A673 (cell line): ENCODE measurements at regions of chr1 and their contacts with region 1.

Region 1: DNA sequence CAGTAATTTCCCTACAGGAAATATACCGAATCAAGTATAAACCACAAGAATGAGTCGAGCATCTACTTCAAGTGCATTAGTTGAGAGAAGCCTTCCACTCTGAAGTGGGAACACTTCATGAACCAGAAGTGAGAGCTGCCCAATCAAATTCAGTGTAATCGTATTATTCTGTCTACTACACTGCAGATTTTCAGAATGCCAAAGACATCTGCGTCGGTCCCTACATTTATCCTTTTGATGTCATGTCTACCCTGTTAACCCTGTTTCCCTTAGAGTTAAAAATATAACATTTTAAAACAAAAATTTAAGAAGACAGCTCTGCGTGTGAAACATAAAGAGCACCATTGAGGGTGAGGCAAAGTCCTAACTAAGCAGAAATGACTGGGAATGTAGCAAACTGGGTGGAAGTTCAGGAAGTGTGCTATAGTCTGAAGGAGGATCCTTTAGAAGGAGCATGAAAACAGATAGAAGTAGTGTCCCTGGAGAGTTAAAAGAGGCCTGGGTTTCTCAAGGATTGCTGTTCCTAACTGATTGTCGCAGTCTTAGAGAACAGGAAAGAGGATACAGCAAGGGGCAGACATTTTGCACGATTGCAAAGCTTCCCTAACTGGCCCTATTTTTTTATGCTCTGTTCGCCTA is 291.2 kb downstream of the PTPRC start:
- DNase-seq: peak; percentile 92
- H3K4me3 ChIP-seq: peak overlapping the region; percentile 68
- H3K27ac ChIP-seq: peak overlapping the region; percentile 94
- H3K4me1 ChIP-seq: peaks cover 66% of the 10 kb centered on the region
- H3K27me3 ChIP-seq: no peaks in the 10 kb centered on the region
- CTCF ChIP-seq: no peak

Region 2: DNA sequence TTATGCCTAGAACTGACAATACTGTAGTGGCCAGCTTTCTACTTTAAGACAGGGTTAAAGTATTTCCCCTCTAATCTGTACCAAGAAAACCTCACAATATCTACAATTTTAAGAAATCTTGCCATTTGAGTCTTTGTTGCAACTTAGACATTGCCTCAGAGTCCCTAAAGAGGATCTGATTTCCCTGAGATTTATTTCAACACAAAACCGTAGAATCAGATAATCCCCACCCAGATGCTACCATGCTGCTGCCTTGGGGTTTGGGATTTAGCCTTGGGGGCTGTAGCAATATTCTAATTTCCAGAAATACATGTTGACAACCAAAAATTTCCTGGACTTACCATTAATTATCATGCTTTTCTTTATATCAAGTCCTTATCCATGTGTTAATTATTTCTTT is 1104.5 kb before region 1 on chr1:
- CTCF ChIA-PET with region 1: no interaction called
- POLR2A ChIA-PET with region 1: no interaction called
- intact Hi-C with region 1: no loop called
- DNase-seq: no peak
- H3K4me3 ChIP-seq: no peak overlapping the region
- H3K27ac ChIP-seq: no peak overlapping the region
- H3K4me1 ChIP-seq: no peaks in the 10 kb centered on the region
- H3K27me3 ChIP-seq: no peaks in the 10 kb centered on the region
- CTCF ChIP-seq: no peak

Region 3: GRCh38 chr1:198717510-198717909 is 212.6 kb before region 1 on chr1:
- CTCF ChIA-PET with region 1: no interaction called
- POLR2A ChIA-PET with region 1: no interaction called
- intact Hi-C with region 1: no loop called
- DNase-seq: no peak
- H3K4me3 ChIP-seq: no peak overlapping the region
- H3K27ac ChIP-seq: no peak overlapping the region
- H3K4me1 ChIP-seq: no peaks in the 10 kb centered on the region
- H3K27me3 ChIP-seq: no peaks in the 10 kb centered on the region
- CTCF ChIP-seq: no peak

Region 4: GRCh38 chr1:199551967-199552565 is 622.0 kb after region 1 on chr1:
- CTCF ChIA-PET with region 1: no interaction called
- POLR2A ChIA-PET with region 1: no interaction called
- intact Hi-C with region 1: loop called (anchors 5 kb)
- DNase-seq: peak; percentile 90
- H3K4me3 ChIP-seq: no peak overlapping the region
- H3K27ac ChIP-seq: peak overlapping the region; percentile 81
- H3K4me1 ChIP-seq: peaks cover 33% of the 10 kb centered on the region
- H3K27me3 ChIP-seq: no peaks in the 10 kb centered on the region
- CTCF ChIP-seq: peak; percentile 92